ENCODE measurements at regions of chr6 and their contacts with region 1.

Region 1: GRCh38 chr6:150891888-150892485 is 26.5 kb downstream of the MTHFD1L start:
- DNase-seq: peak; percentile 79 to 82
- H3K4me3 ChIP-seq: no peak overlapping the region
- H3K27ac ChIP-seq: peak overlapping the region in 1 of 3 donors; percentile 29
- H3K4me1 ChIP-seq: peaks cover 13 to 14% of the 10 kb centered on the region in 2 donors
- H3K27me3 ChIP-seq: no peaks in the 10 kb centered on the region
- CTCF ChIP-seq: peak in 5 of 6 experiments; percentile 64 to 93 (median 89)
- POLR2A ChIP-seq: no peak

Region 2: DNA sequence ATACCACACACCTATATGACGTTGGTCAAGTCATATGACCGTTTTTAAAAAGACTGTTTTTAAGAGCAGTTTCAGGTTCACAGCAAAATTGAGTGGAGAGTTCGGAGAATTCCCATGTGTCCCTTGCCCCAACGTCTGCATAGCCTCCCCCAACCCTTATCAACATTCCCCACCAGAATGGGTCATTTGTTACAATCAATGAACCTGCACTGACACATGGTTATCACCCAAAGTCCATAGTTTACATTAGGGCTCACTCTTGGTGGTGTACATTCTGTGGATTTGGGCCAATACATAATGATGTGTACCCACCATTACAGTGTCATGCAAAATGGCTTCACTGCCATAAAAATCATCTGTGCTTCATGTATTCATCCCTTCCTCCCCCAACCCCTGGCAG is 447.4 kb after region 1 on chr6:
- intact Hi-C with region 1: loop called (anchors 5 kb)
- DNase-seq: no peak
- H3K4me3 ChIP-seq: no peak overlapping the region
- H3K27ac ChIP-seq: no peak overlapping the region
- H3K4me1 ChIP-seq: no peaks in the 10 kb centered on the region
- H3K27me3 ChIP-seq: no peaks in the 10 kb centered on the region
- CTCF ChIP-seq: no peak
- POLR2A ChIP-seq: no peak